Transverse colon (tissue), 4 donors: ENCODE measurements at regions of chr11 and their contacts with region 1.

Region 1: DNA sequence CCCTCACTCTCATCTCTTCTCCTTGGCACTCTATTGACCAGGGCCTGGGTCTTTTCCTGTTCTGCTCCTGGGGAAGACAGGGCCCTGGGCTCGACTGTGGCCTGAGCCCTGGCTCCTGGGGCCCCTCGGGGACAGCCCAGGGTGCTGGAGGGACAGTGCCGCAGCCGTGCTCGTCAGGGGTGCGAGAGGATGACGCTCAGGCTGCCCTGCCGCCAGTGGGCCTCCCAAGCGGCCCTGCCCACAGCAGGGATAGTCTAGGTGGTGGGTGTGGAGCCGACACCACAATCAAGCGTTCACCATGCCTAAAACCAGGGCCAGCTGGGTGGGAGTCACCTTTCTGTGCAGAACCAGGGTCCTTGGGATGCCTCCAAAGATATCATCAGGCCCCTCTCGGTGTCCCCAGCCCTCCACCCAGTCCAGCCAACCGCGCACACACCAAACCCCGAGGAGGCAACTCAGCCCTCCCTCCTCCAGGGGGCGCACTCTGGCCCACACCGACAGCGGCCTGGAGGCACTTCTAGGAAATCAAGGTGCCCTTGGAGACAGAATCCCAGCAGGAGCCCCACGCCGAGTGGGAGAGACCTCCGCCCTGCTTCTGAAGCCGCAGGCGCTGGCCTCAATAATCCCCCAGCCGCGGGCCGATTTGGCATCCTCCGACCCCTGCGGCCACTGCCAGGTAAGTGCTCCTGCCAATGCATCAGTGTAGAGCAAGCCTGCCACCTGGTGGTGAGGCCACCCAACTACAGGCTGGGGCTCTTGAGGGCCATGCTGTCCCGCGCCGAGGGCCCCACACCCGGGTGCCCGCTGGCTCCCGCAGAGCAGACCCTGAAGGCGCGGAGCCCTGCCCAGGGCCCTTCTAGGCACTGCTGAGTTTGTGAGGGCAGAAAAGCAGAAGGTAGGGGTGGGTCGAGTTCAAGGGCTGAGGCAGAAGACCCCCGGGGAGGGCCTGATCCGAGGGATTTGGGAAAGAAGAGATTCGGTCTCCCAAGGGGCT is 496.4 kb downstream of the BUD13 start:
- DNase-seq: peak; percentile 86
- H3K4me3 ChIP-seq: peak overlapping the region in 3 of 4 donors; percentile 16 to 32 (median 20)
- H3K27ac ChIP-seq: no peak overlapping the region
- H3K4me1 ChIP-seq: peaks cover 0 to 4% (median 0%) of the 10 kb centered on the region in 4 donors
- H3K27me3 ChIP-seq: peaks cover 10% of the 10 kb centered on the region
- CTCF ChIP-seq: peak; percentile 80 to 99 (median 97)
- EP300 ChIP-seq: no peak
- POLR2A ChIP-seq: no peak

Region 2: GRCh38 chr11:115990004-115990447 is 286.3 kb before region 1 on chr11:
- in situ Hi-C with region 1: no loop called
- intact Hi-C with region 1: loop called (anchors 10 kb)
- DNase-seq: peak; percentile 15
- H3K4me3 ChIP-seq: no peak overlapping the region
- H3K27ac ChIP-seq: no peak overlapping the region
- H3K4me1 ChIP-seq: no peaks in the 10 kb centered on the region
- H3K27me3 ChIP-seq: no peaks in the 10 kb centered on the region
- CTCF ChIP-seq: peak; percentile 59 to 70 (median 66)
- EP300 ChIP-seq: no peak
- POLR2A ChIP-seq: no peak

Region 3: DNA sequence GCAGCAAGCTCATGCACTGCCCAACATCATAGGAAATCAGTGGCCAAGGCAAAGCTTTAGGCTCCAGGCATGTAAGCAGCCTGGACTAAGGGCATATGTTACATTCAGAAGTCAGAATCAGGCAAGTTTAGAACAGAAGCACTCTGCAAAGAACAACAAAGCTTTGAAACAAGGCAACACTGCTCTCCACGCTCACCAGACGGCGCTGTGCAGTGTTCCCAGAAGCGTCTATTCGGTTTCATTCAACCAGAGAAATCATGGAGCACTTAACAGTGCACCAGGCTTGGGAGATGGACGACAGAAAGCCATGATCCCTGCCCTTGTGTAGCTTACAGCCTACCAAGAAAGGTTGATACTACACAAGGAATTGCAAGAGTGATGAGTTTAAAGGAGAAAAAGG is 59.3 kb before region 1 on chr11:
- in situ Hi-C with region 1: no loop called
- intact Hi-C with region 1: loop called (anchors 5 kb)
- DNase-seq: peak; percentile 34
- H3K4me3 ChIP-seq: no peak overlapping the region
- H3K27ac ChIP-seq: no peak overlapping the region
- H3K4me1 ChIP-seq: no peaks in the 10 kb centered on the region
- H3K27me3 ChIP-seq: no peaks in the 10 kb centered on the region
- CTCF ChIP-seq: peak; percentile 39 to 70 (median 45)
- EP300 ChIP-seq: no peak
- POLR2A ChIP-seq: no peak

Region 4: DNA sequence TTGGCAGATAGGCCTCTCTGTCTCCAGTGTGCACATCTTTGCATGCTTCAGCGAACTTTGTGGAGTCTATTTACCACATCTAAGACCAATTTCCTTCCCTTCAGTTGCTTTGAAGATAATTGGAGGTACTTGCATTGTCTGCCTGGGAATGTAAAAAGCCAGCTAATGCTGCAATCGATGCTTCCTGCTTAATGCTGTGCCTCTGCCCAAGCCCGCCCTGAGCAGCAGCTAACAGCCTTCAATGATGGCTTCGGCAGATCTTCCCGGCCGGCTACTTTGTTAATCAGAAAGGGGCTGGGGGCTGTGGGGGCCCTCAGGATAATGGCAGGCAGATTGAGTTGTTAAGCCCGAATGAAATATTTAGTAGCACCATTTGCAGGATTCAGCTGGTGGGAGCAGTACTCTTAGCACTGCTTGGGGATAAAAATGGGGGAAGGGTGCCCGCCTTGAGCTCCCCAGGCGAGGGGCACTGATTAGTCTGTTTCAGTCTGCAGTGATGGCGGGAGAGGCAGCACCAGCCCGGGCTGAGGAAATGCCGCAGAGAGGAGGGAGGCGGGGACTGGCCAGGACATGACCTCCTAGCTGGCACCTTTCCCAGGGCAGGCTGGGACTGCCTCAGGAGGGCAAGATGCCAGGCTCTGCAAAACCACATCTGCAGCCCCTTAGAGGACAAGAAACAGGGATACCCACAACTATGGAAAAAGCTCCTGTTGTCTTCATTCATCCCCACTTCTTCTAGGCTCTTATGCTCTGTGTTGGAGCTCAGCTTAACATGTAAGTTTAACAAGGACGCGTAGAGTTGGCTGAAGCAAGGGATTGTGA is 36.4 kb after region 1 on chr11:
- in situ Hi-C with region 1: no loop called
- intact Hi-C with region 1: no loop called
- DNase-seq: peak; percentile 69
- H3K4me3 ChIP-seq: no peak overlapping the region
- H3K27ac ChIP-seq: peak overlapping the region in 1 of 4 donors; percentile 15
- H3K4me1 ChIP-seq: peaks cover 4 to 20% (median 11%) of the 10 kb centered on the region in 4 donors
- H3K27me3 ChIP-seq: no peaks in the 10 kb centered on the region
- CTCF ChIP-seq: no peak
- EP300 ChIP-seq: no peak
- POLR2A ChIP-seq: no peak